ENCODE measurements at regions of chr6 and their contacts with region 1.

Region 1: GRCh38 chr6:112640895-112641294 is 293.8 kb downstream of the RFPL4B start:
- DNase-seq: no peak
- H3K4me3 Mint-ChIP-seq: no peak overlapping the region
- H3K27ac Mint-ChIP-seq: no peak overlapping the region
- H3K4me1 Mint-ChIP-seq: no peaks in the 10 kb centered on the region
- H3K27me3 Mint-ChIP-seq: no peaks in the 10 kb centered on the region
- CTCF ChIP-seq: no peak

Region 2: GRCh38 chr6:112237595-112237994 is 403.3 kb before region 1 on chr6:
- CTCF ChIA-PET with region 1: no interaction called
- intact Hi-C with region 1: no loop called
- DNase-seq: no peak
- H3K4me3 Mint-ChIP-seq: no peak overlapping the region
- H3K27ac Mint-ChIP-seq: no peak overlapping the region
- H3K4me1 Mint-ChIP-seq: peaks cover 24% of the 10 kb centered on the region
- H3K27me3 Mint-ChIP-seq: no peaks in the 10 kb centered on the region
- CTCF ChIP-seq: no peak

Region 3: GRCh38 chr6:112851146-112851545 is 210.3 kb after region 1 on chr6:
- CTCF ChIA-PET with region 1: no interaction called
- intact Hi-C with region 1: loop called (anchors 10 kb)
- DNase-seq: no peak
- H3K4me3 Mint-ChIP-seq: no peak overlapping the region
- H3K27ac Mint-ChIP-seq: no peak overlapping the region
- H3K4me1 Mint-ChIP-seq: no peaks in the 10 kb centered on the region
- H3K27me3 Mint-ChIP-seq: no peaks in the 10 kb centered on the region
- CTCF ChIP-seq: no peak